Dendritic cell treated with granulocyte-macrophage colony-stimulating factor and Interleukin-4, amounts not matched to agents 40 ng/mL and 50 ng/mL, for 4 days (primary cell): ENCODE measurements at regions of chr2 and their contacts with region 1.

Region 1: DNA sequence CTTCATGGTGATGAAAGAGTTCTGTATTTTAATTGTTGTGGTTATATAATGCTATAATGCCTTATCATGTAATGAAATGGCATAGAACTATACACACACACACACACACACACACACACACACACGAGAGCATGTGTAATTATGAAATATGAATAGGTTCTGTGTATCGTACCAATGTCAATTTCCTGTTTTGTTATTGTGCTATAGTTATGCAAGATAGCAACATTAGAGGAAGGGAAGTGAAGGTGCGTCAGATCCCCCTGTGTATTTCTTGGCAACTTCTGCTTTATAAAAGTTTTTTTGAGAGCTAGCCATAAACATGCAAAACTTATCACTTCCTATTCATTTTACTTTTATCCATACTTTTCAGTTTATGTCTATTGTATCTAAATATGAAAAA is 60.7 kb upstream of the ARHGAP15 start:
- H3K4me3 Mint-ChIP-seq: no peak overlapping the region
- H3K27ac Mint-ChIP-seq: no peak overlapping the region
- H3K4me1 Mint-ChIP-seq: peaks cover 13% of the 10 kb centered on the region
- H3K27me3 Mint-ChIP-seq: no peaks in the 10 kb centered on the region

Region 2: DNA sequence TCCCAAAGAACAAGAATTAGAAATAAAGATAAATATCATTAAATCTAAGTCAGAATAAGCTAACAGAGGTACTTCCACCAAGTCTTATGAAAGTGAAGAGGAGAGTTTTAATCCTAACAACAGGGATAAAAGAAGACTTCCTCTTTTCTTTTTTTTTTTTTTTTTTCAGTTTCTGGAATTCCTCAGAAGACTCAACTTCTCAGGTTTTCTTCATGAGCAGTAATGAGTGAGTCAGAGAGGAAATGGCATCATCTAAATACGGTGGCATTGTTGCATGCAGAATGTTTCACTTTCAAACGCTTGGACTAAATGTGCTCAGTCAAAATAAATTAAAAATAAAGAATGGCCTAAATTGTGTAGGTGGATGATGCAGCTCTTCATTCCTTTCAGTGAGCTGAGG is 15.1 kb after region 1 on chr2:
- intact Hi-C with region 1: loop called (anchors 1 kb)
- H3K4me3 Mint-ChIP-seq: no peak overlapping the region
- H3K27ac Mint-ChIP-seq: no peak overlapping the region
- H3K4me1 Mint-ChIP-seq: peaks cover 7% of the 10 kb centered on the region
- H3K27me3 Mint-ChIP-seq: no peaks in the 10 kb centered on the region